Endothelial cell of umbilical vein (primary cell): ENCODE measurements at regions of chr3 and their contacts with region 1.

Region 1: DNA sequence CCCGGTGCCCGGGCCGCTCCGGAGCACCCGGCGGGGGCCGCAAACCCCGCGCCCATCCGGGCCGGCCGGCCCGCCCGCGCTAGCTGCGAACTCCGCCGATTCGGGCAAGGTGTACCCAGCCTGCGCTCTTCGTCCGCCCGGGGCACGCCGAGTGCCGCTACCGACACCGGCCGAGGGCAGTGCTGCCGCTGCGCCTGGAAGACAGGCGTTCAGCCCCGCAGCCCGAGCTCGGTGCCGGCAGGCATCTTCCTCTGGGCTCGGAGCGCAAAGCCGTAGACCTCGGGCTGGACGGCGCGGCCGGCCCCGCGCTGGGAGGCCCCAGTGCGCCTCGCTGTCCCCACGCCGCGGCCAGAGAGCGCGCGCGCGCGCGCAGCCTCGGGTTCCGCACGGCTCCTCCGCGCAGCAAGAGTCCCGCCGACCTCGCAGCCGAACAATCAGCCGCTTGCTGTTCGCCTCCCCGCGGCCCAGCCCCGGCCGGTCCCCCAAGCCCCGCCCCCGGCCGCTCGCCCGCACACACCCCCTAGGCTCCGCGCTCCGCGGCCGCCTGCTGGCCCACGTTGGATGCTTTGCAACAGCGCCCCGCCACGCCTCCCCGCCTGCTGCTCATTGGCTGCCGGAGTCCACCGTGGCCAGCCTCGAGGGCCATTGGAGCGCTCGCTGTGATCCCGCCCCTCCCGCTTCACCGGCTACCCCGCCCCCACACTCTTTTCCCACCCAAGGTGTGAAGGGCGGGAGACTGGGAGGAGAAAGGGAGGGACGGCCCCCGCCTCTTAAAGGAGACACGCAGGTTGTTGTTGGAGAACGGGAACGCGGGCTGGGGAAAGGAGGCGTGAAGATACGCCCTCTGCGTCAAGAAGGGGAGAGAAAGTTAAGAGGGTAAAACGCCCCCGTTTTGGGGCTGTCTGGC is at the start of gene LRIG1:
- DNase-seq: peak; percentile 99
- H3K4me3 ChIP-seq: peak within 1 kb of the TSS; percentile 70 to 93 (median 90)
- H3K27ac ChIP-seq: peak within 1 kb of the TSS; percentile 69
- H3K4me1 ChIP-seq: peaks cover 14% of the 10 kb centered on the region
- H3K27me3 ChIP-seq: peaks cover 13 to 18% of the 10 kb centered on the region in 2 experiments
- CTCF ChIP-seq: peak in 1 of 2 donors; percentile 48
- POLR2A ChIP-seq: peak; percentile 80
- total RNA-seq, gene LRIG1: 42.0 and 52.2 TPM in 2 replicates

Region 2: GRCh38 chr3:66336333-66336766 is 164.5 kb before region 1 on chr3:
- CTCF ChIA-PET with region 1: no interaction called
- POLR2A ChIA-PET with region 1: no interaction called
- dilution Hi-C with region 1: no loop called
- intact Hi-C with region 1: loop called (anchors 2 kb)
- DNase-seq: peak; percentile 96
- H3K4me3 ChIP-seq: peak overlapping the region in 1 of 3 experiments; percentile 5
- H3K27ac ChIP-seq: peak overlapping the region; percentile 85
- H3K4me1 ChIP-seq: peaks cover 31% of the 10 kb centered on the region
- H3K27me3 ChIP-seq: no peaks in the 10 kb centered on the region
- CTCF ChIP-seq: no peak
- POLR2A ChIP-seq: no peak

Region 3: GRCh38 chr3:66428733-66429132 is 72.1 kb before region 1 on chr3:
- CTCF ChIA-PET with region 1: no interaction called
- POLR2A ChIA-PET with region 1: no interaction called
- dilution Hi-C with region 1: no loop called
- intact Hi-C with region 1: loop called (anchors 1 kb)
- DNase-seq: peak; percentile 100
- H3K4me3 ChIP-seq: peak overlapping the region in 1 of 3 experiments; percentile 41
- H3K27ac ChIP-seq: peak overlapping the region; percentile 94
- H3K4me1 ChIP-seq: peaks cover 23% of the 10 kb centered on the region
- H3K27me3 ChIP-seq: no peaks in the 10 kb centered on the region
- CTCF ChIP-seq: no peak
- POLR2A ChIP-seq: peak; percentile 56

Region 4: GRCh38 chr3:66442254-66443117 is 58.3 kb before region 1 on chr3:
- CTCF ChIA-PET with region 1: interaction called, 3 read pairs
- POLR2A ChIA-PET with region 1: no interaction called
- dilution Hi-C with region 1: no loop called
- intact Hi-C with region 1: loop called (anchors 1 kb)
- DNase-seq: peak; percentile 92
- H3K4me3 ChIP-seq: no peak overlapping the region
- H3K27ac ChIP-seq: peak overlapping the region; percentile 79
- H3K4me1 ChIP-seq: peaks cover 34% of the 10 kb centered on the region
- H3K27me3 ChIP-seq: no peaks in the 10 kb centered on the region
- CTCF ChIP-seq: no peak
- POLR2A ChIP-seq: no peak

Region 5: DNA sequence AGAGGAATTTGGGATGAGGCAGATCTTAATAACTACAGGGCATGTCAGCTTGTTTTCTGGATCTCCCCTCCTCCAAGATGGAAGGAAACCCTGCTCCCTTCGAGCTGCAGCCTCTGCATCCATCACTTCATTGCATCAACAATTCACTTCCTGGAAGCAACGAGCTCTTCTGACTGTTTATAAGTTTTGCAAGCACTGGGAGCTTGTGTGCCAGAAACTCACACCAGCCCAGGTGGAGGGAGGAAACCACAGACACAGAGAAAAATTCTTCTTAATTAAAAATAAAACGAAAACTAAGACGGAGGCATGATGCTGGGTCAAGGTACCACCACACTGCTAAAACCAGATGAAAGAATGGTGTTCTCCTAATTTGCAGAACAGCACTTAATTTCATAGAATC is 10.6 kb before region 1 on chr3:
- CTCF ChIA-PET with region 1: interaction called, 6 read pairs
- POLR2A ChIA-PET with region 1: interaction called, 10 read pairs
- dilution Hi-C with region 1: no loop called
- intact Hi-C with region 1: loop called (anchors 1 kb)
- DNase-seq: peak; percentile 71
- H3K4me3 ChIP-seq: no peak overlapping the region
- H3K27ac ChIP-seq: no peak overlapping the region
- H3K4me1 ChIP-seq: peaks cover 33% of the 10 kb centered on the region
- H3K27me3 ChIP-seq: no peaks in the 10 kb centered on the region
- CTCF ChIP-seq: no peak
- POLR2A ChIP-seq: no peak

Region 6: GRCh38 chr3:66644549-66644948 is 143.7 kb after region 1 on chr3:
- CTCF ChIA-PET with region 1: no interaction called
- POLR2A ChIA-PET with region 1: no interaction called
- dilution Hi-C with region 1: no loop called
- intact Hi-C with region 1: no loop called
- DNase-seq: no peak
- H3K4me3 ChIP-seq: no peak overlapping the region
- H3K27ac ChIP-seq: no peak overlapping the region
- H3K4me1 ChIP-seq: no peaks in the 10 kb centered on the region
- H3K27me3 ChIP-seq: peaks cover 0 to 2% of the 10 kb centered on the region in 2 experiments
- CTCF ChIP-seq: no peak
- POLR2A ChIP-seq: no peak

Region 7: DNA sequence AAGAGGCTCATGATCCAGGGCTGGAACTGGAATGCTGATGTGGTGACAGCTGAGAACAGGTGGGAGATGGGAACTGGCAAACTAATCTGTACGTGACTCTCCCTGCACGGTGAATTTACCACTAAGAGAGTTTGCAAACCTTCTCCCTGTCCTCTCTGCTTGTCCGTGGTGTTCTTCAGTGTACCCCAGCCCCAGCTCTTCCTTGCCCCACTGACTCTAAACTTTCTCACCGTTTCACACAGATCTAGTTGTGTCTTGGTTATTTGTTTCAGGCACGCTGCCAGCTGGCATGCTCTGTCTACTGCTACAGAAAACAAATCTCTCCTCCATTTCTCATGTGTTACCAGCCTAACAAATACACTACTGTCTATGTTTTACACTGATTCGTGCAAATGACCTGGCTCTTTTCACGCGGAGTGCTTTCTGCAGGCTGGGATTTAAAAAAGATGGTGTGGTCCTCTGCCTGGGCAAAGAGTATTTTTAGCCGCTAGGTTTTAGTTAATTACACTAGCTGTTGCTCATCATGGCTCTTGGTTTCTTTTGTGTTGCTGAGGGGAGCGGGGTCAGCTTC is 192.7 kb after region 1 on chr3:
- CTCF ChIA-PET with region 1: no interaction called
- POLR2A ChIA-PET with region 1: no interaction called
- dilution Hi-C with region 1: no loop called
- intact Hi-C with region 1: no loop called
- DNase-seq: no peak
- H3K4me3 ChIP-seq: no peak overlapping the region
- H3K27ac ChIP-seq: no peak overlapping the region
- H3K4me1 ChIP-seq: no peaks in the 10 kb centered on the region
- H3K27me3 ChIP-seq: peaks cover 0 to 2% of the 10 kb centered on the region in 2 experiments
- CTCF ChIP-seq: no peak
- POLR2A ChIP-seq: no peak

Region 8: DNA sequence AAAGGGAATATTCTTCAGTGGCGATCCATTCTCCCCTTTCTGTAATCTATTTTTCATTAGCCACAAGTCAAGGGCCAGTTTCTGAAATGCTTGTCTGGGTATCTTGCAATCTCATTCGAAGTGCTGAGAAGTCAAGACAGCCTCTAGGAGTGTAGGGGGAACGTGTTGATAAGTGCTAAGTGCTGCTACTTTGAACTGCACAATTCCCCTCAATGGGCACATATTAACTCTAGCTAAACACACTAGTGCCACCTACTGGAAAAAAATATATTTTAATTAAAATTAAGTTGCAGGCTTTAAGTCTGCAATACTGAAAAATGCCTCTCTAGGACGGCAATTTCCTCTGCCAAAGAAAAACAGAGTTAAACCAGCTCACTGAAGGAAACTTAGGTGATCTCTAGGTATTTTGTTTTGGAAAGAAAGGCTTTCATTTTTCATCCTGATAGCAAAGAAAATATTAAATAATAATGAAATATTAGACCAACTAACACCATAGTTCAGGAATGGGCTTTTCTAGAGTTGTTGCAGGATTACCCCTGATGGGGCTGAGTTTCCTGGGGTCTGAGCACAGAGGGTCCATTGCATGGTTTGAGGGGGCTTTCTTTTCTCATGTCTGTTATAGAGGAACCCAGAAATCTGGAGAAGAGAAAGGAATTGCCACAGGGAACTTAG is 315.4 kb after region 1 on chr3:
- CTCF ChIA-PET with region 1: no interaction called
- POLR2A ChIA-PET with region 1: no interaction called
- dilution Hi-C with region 1: no loop called
- intact Hi-C with region 1: loop called (anchors 2 kb)
- DNase-seq: peak; percentile 64
- H3K4me3 ChIP-seq: no peak overlapping the region
- H3K27ac ChIP-seq: no peak overlapping the region
- H3K4me1 ChIP-seq: no peaks in the 10 kb centered on the region
- H3K27me3 ChIP-seq: peaks cover 17 to 20% of the 10 kb centered on the region in 2 experiments
- CTCF ChIP-seq: peak in 1 of 2 donors; percentile 26
- POLR2A ChIP-seq: no peak

Region 9: DNA sequence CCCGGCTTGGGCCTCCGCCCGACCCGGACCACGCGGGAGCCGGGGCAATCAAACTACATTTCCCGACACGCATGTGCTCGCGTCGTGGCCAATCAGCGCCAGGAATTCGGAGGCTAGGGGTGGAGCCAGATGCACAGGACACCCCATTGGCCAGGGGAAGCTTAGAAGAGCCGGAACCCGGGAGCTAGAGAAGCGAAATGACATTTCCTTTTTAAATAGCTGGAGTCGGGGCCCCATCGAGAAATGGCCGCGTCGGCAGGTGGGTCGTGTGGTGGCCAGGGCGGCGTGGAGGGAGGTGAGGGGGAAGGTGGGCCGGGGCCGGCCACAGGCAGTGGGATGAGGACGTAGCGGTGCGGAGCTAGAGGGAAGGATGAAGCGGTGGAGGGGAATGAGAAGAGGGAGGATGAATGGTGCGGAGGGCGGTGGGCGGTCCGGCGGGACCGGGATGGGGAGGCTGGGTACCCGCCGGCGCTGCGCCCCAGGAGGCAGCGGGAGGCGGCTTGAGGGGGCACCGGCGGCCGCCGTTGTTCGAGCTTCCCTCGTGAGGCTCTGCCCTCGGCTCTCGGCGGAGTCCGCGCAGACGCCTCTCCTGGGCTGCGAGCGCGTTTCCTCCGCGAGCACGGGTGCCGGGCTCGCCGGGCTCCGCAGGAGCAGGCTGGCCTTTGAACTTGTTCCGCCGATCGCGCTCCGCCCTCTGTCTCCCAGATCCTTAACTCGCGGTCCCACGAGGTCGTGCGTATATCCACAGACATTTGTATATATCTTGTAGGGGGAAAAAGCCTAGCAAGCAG is 497.5 kb after region 1 on chr3 and contains the start of gene KBTBD8:
- CTCF ChIA-PET with region 1: no interaction called
- POLR2A ChIA-PET with region 1: no interaction called
- dilution Hi-C with region 1: no loop called
- intact Hi-C with region 1: loop called (anchors 1 kb)
- DNase-seq: peak; percentile 99
- H3K4me3 ChIP-seq: peak within 1 kb of the TSS; percentile 76 to 93 (median 82)
- H3K27ac ChIP-seq: peak within 1 kb of the TSS; percentile 35
- H3K4me1 ChIP-seq: peaks cover 17% of the 10 kb centered on the region
- H3K27me3 ChIP-seq: peaks cover 0 to 15% of the 10 kb centered on the region in 2 experiments
- CTCF ChIP-seq: no peak
- POLR2A ChIP-seq: peak; percentile 45
- total RNA-seq, gene KBTBD8: 1.1 and 3.2 TPM in 2 replicates